ENCODE measurements at regions of chr9 and their contacts with region 1.

Region 1: DNA sequence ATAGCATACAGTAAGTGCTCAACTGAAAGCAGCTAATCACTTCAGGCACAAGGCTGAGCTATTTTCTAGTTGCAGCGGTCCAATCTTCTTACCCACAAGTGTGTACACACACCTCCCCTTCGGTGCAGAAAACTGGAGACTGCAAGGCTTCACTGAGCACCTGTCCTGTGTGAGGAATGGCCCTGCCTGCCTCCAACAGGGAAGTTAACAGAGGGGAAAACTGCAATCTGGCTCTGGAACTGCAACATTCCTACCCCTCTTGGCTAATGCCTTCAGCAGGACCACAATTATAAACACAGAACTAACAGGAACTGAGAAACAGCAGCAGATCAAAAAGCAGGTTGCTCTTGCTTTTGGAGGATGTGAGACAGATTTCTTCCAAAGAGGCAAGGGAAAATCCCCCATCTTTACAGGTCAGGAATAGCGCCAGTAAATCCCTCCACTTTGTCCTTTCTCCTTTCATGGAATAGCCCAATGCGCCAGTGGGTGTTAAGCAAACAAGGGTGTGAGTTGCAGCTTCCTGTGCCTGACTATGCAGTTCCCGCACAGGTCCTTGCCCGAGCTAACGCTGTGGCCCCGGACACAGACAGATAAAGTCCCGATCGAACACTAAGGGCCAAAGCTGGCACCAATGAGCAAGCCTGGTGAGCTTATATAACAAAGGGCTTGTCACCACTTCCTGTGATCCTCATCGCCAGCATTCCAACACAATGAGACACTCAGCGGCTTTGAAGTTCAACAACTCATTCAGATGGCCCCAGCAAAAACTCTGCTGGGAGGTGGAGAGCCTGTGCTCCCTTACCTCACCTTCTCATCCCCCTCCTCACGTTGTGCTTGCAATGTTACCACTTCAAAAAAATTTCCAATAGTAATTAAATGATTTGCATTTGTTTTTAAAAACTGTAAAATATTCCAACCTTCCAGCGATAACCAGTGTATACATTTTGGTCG is 21.5 kb downstream of the SHB start:
- DNase-seq: peak in 1 of 2 donors; percentile 89
- H3K4me3 ChIP-seq: peak overlapping the region; percentile 5 to 32
- H3K27ac ChIP-seq: peak overlapping the region; percentile 76 to 85
- H3K4me1 ChIP-seq: peaks cover 13 to 37% of the 10 kb centered on the region in 2 donors
- H3K27me3 ChIP-seq: no peaks in the 10 kb centered on the region
- CTCF ChIP-seq: no peak

Region 2: DNA sequence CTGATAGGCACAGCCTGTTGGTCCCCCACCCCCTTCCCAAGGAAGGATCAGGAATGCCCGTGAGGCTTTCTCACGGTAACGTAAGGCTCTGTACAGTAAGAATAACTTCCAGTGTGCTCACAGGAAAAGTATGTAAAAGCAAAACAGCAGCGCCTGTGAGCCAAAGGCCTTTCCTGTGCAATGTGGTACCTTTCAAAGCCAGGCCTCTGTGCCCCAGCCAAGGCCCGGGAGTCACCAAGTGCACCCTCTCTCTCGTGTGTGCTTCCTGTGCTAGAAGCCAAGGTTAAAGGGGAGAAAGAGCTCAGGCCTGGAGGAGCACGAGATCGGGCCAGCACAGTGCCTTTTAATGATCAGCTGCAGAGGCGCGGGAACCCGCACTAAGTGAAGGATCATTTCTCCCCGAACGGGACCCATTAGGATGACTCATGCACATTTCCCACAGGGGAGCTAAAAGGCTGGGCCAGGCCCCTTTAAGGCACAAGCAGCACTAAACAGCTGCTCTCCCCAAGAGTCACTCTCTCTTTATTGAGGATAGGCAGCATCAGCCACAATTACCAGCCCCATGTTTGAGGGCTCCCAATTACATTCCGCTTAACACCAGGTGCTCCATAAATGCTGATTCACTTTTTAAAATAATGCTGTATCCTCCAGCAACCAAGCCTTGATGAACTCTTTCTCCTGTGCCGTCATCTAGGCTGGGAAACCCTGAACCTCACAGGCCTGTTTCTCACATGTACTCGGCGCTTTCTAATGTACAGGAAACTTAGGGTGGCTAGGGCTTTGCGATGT is 21.4 kb before region 1 on chr9:
- intact Hi-C with region 1: loop called (anchors 2 kb)
- DNase-seq: peak; percentile 25 to 84
- H3K4me3 ChIP-seq: peak overlapping the region in 1 of 2 donors; percentile 8
- H3K27ac ChIP-seq: peak overlapping the region; percentile 68 to 85
- H3K4me1 ChIP-seq: peaks cover 22 to 56% of the 10 kb centered on the region in 2 donors
- H3K27me3 ChIP-seq: no peaks in the 10 kb centered on the region
- CTCF ChIP-seq: no peak

Region 3: DNA sequence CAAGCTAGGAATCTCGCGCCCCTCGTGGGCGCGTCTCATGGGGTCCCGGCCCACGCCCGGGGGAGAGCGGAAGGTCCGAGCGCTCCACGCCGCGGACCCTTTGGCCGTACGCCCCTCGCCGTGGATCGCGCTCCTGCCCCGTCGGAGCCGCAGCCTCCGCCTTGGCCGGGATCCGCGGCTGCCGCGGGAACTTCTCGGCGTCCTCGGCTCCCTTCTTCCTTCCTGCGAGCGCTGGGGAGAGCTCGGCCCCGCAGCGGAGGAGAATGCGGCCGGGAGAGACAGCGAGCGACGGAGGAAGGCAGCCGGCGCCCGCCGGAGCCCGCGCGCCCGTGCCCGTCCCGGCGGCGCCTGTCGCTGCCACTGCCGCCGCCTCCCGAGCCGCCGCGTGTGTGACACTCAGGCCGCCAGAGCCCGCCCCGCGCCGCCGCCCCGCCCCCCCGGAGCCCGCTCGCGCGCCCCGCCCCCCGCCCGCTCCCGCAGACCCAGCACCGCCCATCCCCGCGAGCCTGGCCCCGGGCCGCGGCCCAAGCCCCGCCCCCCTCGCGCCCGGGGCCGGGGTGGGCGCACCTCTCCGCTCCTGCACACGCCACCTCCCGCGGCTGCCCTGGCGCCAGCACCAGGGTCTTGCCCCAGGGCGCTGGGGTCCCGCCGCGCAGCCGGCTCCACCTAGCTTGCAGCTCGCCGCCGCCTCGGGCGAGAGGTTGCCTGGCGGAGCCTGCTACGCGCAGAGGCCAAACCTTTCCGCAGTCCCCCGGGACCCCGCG is 21.5 kb after region 1 on chr9 and contains the start of gene SHB:
- intact Hi-C with region 1: loop called (anchors 1 kb)
- DNase-seq: peak in 1 of 2 donors; percentile 87
- H3K4me3 ChIP-seq: peak within 1 kb of the TSS; percentile 87 to 97
- H3K27ac ChIP-seq: peak within 1 kb of the TSS; percentile 90 to 99
- H3K4me1 ChIP-seq: peaks cover 3 to 14% of the 10 kb centered on the region in 2 donors
- H3K27me3 ChIP-seq: no peaks in the 10 kb centered on the region
- CTCF ChIP-seq: peak in 2 of 3 experiments; percentile 15 to 37
- total RNA-seq, gene SHB: 77.8 TPM

Measured in ascending aorta (tissue), 2 donors.